Activated CD4-positive, alpha-beta memory T cell treated with anti-CD3 and anti-CD28 coated beads for 36 hours (primary cell): ENCODE measurements at regions of chrX and their contacts with region 1.

Region 1: DNA sequence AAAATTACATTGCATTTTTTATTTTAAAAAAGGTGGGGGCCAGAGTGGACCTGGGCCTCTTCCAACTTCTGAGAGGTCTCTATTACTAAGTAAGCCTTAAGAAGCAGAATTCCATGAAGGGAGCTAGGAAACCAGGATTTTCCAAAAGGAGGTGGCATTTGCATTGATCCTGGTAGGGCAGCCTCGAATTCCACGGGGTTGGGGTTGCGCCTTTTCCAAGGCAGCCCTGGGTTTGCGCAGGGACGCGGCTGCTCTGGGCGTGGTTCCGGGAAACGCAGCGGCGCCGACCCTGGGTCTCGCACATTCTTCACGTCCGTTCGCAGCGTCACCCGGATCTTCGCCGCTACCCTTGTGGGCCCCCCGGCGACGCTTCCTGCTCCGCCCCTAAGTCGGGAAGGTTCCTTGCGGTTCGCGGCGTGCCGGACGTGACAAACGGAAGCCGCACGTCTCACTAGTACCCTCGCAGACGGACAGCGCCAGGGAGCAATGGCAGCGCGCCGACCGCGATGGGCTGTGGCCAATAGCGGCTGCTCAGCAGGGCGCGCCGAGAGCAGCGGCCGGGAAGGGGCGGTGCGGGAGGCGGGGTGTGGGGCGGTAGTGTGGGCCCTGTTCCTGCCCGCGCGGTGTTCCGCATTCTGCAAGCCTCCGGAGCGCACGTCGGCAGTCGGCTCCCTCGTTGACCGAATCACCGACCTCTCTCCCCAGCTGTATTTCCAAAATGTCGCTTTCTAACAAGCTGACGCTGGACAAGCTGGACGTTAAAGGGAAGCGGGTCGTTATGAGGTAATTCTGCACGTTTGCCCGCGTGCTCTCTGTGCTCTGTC is at the start of gene PGK1:
- DNase-seq: peak; percentile 96
- H3K4me3 Mint-ChIP-seq: peak within 1 kb of the TSS; percentile 93
- H3K27ac Mint-ChIP-seq: peak within 1 kb of the TSS; percentile 90
- H3K4me1 Mint-ChIP-seq: peaks cover 40% of the 10 kb centered on the region
- H3K27me3 Mint-ChIP-seq: no peaks in the 10 kb centered on the region
- total RNA-seq, gene PGK1: 908 to 924 TPM

Region 2: GRCh38 chrX:78066110-78066509 is 37.7 kb before region 1 on chrX:
- CTCF ChIA-PET with region 1: interaction called, 7 read pairs
- POLR2A ChIA-PET with region 1: interaction called, 3 read pairs
- intact Hi-C with region 1: loop called (anchors 1 kb)
- DNase-seq: no peak
- H3K4me3 Mint-ChIP-seq: no peak overlapping the region
- H3K27ac Mint-ChIP-seq: no peak overlapping the region
- H3K4me1 Mint-ChIP-seq: peaks cover 13% of the 10 kb centered on the region
- H3K27me3 Mint-ChIP-seq: no peaks in the 10 kb centered on the region

Region 3: DNA sequence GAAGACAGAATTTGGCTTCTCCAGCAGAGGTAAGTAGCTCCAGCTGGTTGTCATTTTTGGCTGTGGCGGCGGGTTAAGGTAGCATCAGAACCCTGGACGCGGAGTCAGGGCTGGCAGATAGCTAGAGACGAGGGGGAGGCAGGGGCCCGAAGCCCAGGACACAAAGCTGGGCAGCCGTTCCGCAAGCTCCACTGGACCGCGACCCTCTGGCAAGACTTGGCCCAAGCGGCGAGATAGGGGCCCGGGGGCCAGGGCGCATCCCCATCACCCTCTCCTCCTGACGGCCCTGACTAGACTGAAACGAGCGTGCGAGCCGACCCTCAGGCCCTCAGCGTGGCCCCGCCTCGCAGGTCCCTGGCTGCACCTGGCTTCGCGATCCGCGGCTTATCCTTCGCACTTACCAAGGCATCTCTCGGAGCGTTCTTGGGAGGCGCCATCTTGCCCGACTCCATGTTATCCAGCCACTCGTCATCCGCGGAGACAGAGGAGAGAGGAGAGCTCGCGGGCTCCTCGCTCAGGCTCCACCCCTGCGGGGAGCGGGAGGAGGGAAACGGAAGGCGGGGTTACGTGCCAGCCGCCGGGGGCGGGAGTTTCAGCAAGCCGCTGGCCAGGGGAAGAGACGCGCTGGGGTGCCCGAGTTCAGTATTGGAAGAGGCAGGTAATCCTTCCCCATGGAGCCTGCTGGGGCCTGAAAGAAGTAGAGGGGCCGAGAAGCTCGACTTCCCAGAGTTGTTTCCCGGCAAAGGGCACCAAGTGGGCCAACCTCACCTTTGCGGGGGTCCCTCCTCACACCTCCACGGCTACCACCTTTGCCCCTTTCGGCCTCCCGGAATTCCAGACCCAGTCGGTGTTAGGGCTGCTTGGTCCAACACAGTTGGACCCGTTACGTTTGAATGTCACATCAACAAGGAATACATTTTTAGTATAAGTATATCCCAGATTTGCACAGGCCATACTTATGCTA is 35.6 kb after region 1 on chrX and contains the start of gene TAF9B:
- CTCF ChIA-PET with region 1: no interaction called
- POLR2A ChIA-PET with region 1: interaction called, 6 read pairs
- intact Hi-C with region 1: loop called (anchors 1 kb)
- DNase-seq: peak; percentile 90
- H3K4me3 Mint-ChIP-seq: peak within 1 kb of the TSS; percentile 88
- H3K27ac Mint-ChIP-seq: peak within 1 kb of the TSS; percentile 87
- H3K4me1 Mint-ChIP-seq: peaks cover 16% of the 10 kb centered on the region
- H3K27me3 Mint-ChIP-seq: no peaks in the 10 kb centered on the region
- total RNA-seq, gene TAF9B: 23.0 TPM

Region 4: DNA sequence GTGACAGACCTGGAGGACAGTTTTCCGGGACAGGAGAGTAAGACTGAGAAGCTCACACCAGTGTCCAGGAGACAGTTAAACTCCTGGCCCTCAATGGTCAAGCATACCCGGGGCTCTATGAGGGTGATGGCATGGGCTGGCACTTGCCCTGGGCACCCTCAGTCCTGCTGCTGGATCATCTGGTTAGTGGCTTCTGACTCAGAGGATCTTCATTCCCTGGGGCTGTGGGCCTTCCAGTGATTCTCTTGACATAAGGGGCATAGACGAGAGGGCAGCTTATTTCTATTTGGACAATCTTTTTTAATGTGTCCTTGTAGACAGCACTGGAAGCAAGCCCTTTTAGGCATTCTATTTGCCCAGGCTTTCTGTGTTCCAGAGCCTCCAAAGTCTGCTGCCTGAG is 243.0 kb after region 1 on chrX:
- CTCF ChIA-PET with region 1: no interaction called
- POLR2A ChIA-PET with region 1: no interaction called
- intact Hi-C with region 1: no loop called
- DNase-seq: no peak
- H3K4me3 Mint-ChIP-seq: no peak overlapping the region
- H3K27ac Mint-ChIP-seq: no peak overlapping the region
- H3K4me1 Mint-ChIP-seq: no peaks in the 10 kb centered on the region
- H3K27me3 Mint-ChIP-seq: no peaks in the 10 kb centered on the region

Region 5: DNA sequence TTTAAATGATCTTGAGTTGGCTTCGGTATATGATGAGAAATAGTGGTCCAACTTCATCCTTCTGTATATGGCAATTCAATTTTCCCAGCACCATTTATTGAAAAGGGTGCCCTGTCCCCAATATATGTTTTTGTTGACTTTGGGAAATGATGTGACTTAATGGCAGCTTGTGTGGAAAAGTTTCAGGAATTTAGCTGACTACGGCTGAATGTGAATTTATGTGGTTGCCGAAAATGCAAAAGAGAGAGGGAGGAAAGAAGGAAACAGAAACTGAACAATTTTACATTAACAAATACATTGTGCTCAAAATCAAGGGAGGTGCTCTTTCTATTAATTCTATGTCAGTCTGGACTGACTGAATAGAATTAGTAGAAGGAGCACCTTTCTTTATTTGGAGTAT is 325.3 kb after region 1 on chrX:
- CTCF ChIA-PET with region 1: no interaction called
- POLR2A ChIA-PET with region 1: no interaction called
- intact Hi-C with region 1: no loop called
- DNase-seq: no peak
- H3K4me3 Mint-ChIP-seq: no peak overlapping the region
- H3K27ac Mint-ChIP-seq: no peak overlapping the region
- H3K4me1 Mint-ChIP-seq: no peaks in the 10 kb centered on the region
- H3K27me3 Mint-ChIP-seq: no peaks in the 10 kb centered on the region

Region 6: DNA sequence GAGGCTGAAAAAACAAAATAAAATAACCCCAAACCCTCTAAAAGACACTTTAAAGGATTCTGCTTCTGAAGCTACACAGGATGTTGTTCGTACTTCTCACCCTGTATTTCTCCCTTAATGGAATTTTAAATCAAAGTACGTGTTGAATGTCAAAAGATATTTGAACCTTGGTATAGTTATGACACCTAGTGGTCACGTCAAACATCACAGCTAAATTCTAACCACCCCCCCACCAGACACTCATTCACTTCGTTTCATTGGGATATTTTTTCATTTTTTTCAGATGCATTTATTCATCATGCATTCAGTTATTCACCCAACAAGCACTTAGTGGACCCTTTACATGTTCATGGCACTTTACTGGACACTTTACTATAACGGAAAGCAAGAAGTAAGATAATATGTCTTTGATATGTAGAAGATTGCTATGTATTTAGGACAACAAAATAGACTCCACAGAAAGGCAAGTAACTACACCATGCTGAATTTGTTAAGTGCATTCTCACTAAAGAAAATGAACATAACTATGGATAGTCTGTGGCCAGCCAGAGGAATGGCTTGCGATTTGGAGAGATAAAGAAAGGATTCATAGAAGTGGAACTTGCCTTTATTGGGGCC is 978.2 kb after region 1 on chrX:
- CTCF ChIA-PET with region 1: no interaction called
- POLR2A ChIA-PET with region 1: no interaction called
- intact Hi-C with region 1: loop called (anchors 10 kb)
- DNase-seq: peak; percentile 30
- H3K4me3 Mint-ChIP-seq: peak overlapping the region; percentile 69
- H3K27ac Mint-ChIP-seq: peak overlapping the region; percentile 79
- H3K4me1 Mint-ChIP-seq: peaks cover 41% of the 10 kb centered on the region
- H3K27me3 Mint-ChIP-seq: no peaks in the 10 kb centered on the region

Region 7: DNA sequence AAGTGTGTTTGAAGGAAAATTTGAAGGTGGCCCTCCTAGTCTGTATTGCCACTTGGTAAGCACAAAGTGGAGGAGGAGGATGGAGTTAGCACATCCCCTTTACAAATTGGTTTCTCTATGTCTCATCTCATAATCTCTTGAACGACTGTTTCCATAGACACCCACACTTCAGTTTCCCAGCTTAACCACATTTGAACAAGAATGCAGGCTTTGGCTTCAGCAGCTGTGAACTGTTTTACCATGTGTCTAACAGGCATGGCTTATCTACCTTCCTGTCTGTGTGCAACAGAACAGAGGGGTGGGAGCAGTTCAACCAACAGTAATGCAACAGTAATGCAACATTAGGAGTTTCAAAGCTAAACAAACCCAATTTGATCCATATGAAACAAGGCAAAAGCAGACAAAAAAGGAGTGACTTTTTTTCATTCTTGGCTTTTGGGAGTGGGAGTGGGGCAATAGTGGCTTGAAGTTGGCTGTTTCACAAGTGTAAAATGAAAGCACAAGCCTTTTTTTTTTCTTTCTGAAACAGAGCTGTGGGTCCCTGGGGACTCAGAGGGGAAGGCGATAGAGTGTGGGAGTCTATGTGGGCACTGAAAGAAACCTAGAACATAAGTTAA is 1155.3 kb after region 1 on chrX:
- CTCF ChIA-PET with region 1: no interaction called
- POLR2A ChIA-PET with region 1: interaction called, 3 read pairs
- intact Hi-C with region 1: loop called (anchors 10 kb)
- DNase-seq: peak; percentile 58
- H3K4me3 Mint-ChIP-seq: peak overlapping the region; percentile 57
- H3K27ac Mint-ChIP-seq: peak overlapping the region; percentile 91
- H3K4me1 Mint-ChIP-seq: peaks cover 81% of the 10 kb centered on the region
- H3K27me3 Mint-ChIP-seq: no peaks in the 10 kb centered on the region